Astrocyte of the cerebellum (primary cell): ENCODE measurements at regions of chr1 and their contacts with region 1.

Region 1: DNA sequence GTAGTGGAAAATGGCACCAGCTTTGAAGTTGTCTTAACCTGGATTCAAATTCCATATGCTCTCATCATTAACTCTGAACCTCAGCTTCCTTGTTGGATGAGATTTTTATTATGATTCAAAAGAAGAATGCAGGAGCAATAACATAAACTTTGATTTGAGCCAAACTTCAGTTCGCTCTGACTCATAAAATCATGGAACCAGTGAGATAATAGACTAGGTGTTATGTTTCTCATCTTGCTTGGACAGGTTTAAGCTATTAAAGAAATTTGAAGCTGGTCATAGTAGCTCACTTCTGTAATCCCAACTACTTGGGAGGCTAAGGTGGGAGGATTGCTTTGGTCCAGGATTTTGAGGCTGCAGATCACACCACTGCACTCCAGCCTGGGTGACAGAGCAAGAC is 172.8 kb downstream of the CLEC20A start:
- DNase-seq: no peak
- H3K4me3 ChIP-seq: no peak overlapping the region
- CTCF ChIP-seq: no peak

Region 2: DNA sequence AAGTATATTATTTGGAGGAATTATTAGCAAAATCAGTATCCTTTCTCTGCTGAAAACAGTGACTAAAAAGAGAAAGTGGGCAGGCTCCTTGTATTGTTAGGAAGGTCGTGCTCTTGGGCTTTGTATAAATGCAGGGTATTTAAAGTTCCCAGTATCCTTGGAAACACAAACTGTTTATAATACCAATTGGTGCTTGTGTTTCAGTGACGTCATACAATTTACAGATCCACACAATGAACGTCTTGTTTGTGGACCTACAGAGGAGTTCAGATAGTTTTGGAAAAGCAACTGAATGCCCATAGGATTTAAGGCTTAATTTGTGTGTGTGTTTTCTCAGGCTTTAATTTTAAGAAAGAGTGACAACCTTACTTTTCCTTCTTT is 61.9 kb before region 1 on chr1:
- in situ Hi-C with region 1: no loop called
- DNase-seq: peak; percentile 60
- H3K4me3 ChIP-seq: no peak overlapping the region
- CTCF ChIP-seq: no peak

Region 3: DNA sequence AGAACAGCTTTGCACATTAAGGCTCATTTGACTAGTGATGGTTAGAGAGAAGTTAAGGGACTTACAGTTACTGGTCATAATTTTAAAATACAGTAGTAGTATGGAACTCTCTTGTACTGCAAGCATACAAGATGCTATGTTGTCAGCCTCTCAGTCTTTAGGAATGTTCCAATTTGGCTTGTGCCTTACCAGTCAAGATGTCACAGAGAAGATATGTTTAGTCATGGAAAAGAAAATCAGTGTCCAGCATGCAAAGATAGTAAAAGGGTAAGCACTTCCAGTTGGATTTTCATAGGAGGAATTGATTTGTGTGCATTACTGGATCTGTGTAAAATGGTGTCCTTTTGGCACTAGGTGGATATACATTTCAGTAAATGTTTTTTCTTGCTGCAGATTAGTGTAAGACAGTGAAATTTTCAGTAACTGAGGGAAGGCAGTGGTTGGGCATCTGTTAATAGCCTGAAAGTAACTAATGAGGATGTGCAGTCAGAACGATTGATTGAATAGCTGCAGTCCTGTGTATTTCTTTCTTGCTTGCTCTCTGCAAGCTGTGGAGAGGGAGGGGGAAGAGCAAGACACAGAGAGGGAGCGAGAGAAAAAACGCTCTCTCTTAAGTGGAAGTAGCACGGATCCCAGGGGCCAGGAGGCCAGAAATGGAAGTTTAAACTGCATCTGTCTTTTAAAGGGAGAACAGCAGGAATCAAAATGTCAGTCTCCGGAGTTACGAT is 64.6 kb after region 1 on chr1:
- in situ Hi-C with region 1: no loop called
- DNase-seq: no peak
- H3K4me3 ChIP-seq: no peak overlapping the region
- CTCF ChIP-seq: no peak

Region 4: DNA sequence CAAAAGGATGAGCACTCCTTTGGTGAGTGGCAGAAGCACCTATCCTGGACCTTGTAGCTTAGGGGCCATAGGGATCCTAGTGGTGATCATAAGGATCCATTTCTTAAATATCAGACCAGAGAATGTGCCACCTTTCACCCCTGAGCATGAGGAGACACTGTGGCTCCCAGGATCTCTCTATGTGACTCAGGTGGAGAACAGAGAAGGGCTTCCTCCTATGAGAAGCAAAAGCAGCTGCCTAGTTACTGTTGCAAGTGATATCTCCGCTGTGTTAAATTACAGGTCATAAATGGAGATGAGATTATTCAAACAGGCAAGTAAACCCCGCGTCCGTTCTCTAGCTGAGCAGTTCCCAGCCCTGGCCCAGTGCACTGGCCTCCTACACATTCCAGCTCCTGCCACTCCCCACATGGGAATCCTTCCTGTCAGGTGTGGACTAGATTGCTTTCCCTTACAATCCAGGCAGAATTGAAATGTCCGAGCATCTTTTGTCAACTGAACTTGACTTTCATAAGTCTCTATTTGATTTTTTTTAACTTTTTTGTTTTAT is 146.5 kb after region 1 on chr1:
- in situ Hi-C with region 1: loop called (anchors 10 kb)
- DNase-seq: no peak
- H3K4me3 ChIP-seq: no peak overlapping the region
- CTCF ChIP-seq: no peak